ENCODE measurements at regions of chr17 and their contacts with region 1.

Region 1: GRCh38 chr17:50949989-50950881 is 84.1 kb upstream of the TOB1 start:
- DNase-seq: peak; percentile 66
- H3K4me3 Mint-ChIP-seq: no peak overlapping the region
- H3K27ac Mint-ChIP-seq: no peak overlapping the region
- H3K4me1 Mint-ChIP-seq: peaks cover 53% of the 10 kb centered on the region
- H3K27me3 Mint-ChIP-seq: peaks cover 25% of the 10 kb centered on the region

Region 2: DNA sequence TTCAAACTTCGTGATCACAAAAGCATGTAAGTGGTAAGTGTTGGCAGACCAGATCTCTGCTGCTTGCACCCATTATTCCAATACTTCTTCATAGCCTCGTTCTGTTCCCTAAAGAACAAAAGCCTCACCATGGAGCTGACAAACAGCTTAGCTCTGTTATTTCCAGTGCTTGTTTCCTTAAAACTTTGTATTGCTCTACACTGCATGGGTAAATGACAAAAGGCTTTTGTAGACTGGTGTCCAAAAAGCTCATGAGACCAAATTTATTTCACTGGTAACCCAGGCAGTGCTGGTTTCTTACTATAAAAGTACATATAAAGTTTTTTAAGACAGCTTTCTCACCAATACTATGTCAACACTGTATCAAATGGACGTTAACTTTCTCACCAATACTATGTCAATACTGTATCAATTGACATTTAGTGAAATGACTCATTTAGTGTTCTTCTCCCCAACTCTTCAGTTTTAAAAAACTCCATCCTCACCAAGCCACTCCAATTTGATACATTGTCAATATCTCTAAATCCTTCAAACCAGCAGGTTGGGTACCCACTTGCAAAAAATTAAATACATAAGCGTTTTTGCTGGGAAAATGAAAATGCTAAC is 89.1 kb before region 1 on chr17:
- CTCF ChIA-PET with region 1: interaction called, 173 read pairs
- DNase-seq: no peak
- H3K4me3 Mint-ChIP-seq: no peak overlapping the region
- H3K27ac Mint-ChIP-seq: no peak overlapping the region
- H3K4me1 Mint-ChIP-seq: peaks cover 26% of the 10 kb centered on the region
- H3K27me3 Mint-ChIP-seq: no peaks in the 10 kb centered on the region

Region 3: DNA sequence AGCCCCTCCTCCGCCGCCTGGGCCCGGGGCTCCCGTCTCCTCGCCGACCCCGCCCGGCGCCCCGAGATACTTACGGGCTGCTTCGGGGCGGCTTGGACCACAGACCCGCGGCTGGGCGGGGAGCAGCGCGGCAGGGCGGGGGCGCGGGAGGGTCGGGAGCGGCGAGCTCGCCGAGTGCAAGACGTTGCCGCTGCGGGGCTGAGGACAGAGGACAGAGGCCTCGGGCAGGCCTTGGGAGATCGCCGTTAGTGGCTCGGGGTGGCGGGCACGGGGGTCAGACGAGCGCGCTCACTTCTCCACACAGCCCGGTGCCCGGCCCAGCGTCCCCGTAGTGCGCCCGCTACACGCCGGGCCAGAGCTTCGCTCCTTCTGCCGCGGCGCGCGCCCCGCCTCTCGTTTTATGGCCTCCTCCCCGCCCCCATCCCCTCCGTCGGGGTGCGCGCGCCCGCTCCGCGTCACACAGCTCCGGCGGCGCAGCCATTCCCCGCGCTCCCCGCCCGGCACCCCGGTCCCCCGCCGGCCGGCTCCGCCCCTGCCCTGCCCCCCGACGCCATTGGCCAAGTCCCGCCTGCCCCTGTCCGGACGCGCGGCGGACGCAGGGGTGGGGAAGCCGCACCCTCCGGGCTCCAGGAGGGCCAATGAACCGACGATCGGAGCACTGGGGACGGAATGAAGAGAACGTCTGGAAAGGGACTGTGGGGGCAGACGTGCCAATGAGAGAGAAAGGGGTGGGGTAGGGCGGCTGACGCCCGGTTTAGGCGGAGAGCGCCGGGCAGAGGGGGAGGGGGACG is 84.1 kb before region 1 on chr17 and contains the start of gene TOB1:
- CTCF ChIA-PET with region 1: interaction called, 26 read pairs
- DNase-seq: peak; percentile 97
- H3K4me3 Mint-ChIP-seq: peak within 1 kb of the TSS; percentile 95
- H3K27ac Mint-ChIP-seq: peak within 1 kb of the TSS; percentile 98
- H3K4me1 Mint-ChIP-seq: peaks cover 54% of the 10 kb centered on the region
- H3K27me3 Mint-ChIP-seq: peaks cover 3% of the 10 kb centered on the region

Region 4: GRCh38 chr17:50923611-50924010 is 26.6 kb before region 1 on chr17:
- CTCF ChIA-PET with region 1: no interaction called
- DNase-seq: no peak
- H3K4me3 Mint-ChIP-seq: no peak overlapping the region
- H3K27ac Mint-ChIP-seq: no peak overlapping the region
- H3K4me1 Mint-ChIP-seq: peaks cover 48% of the 10 kb centered on the region
- H3K27me3 Mint-ChIP-seq: peaks cover 40% of the 10 kb centered on the region

Measured in activated naive CD4-positive, alpha-beta T cell treated with anti-CD3 and anti-CD28 coated beads, Interleukin-2, amount 10 ng/mL, durations not matched to agents 7 days and 5 days (primary cell).